IMR-90 (cell line): ENCODE measurements at regions of chr2 and their contacts with region 1.

Region 1: GRCh38 chr2:55431982-55432627 is 12.4 kb upstream of the CCDC88A start:
- DNase-seq: peak; percentile 56
- ATAC-seq: peak; percentile 79
- H3K4me3 ChIP-seq: no peak overlapping the region
- H3K27ac ChIP-seq: no peak overlapping the region
- H3K4me1 ChIP-seq: no peaks in the 10 kb centered on the region
- H3K27me3 ChIP-seq: peaks cover 1% of the 10 kb centered on the region; the same call in 1 of the 2 replicates
- CTCF ChIP-seq: peak; percentile 68
- POLR2A ChIP-seq: no peak
- RAD21 ChIP-seq: peak; percentile 72

Region 2: GRCh38 chr2:55460562-55460961 is 28.5 kb after region 1 on chr2:
- CTCF ChIA-PET with region 1: no interaction called
- POLR2A ChIA-PET with region 1: no interaction called
- dilution Hi-C with region 1: no loop called
- in situ Hi-C with region 1: no loop called
- intact Hi-C with region 1: no loop called
- DNase-seq: peak; percentile 32
- ATAC-seq: no peak
- H3K4me3 ChIP-seq: no peak overlapping the region
- H3K27ac ChIP-seq: no peak overlapping the region
- H3K4me1 ChIP-seq: no peaks in the 10 kb centered on the region
- H3K27me3 ChIP-seq: peaks cover 11% of the 10 kb centered on the region
- CTCF ChIP-seq: no peak
- POLR2A ChIP-seq: no peak
- RAD21 ChIP-seq: no peak

Region 3: DNA sequence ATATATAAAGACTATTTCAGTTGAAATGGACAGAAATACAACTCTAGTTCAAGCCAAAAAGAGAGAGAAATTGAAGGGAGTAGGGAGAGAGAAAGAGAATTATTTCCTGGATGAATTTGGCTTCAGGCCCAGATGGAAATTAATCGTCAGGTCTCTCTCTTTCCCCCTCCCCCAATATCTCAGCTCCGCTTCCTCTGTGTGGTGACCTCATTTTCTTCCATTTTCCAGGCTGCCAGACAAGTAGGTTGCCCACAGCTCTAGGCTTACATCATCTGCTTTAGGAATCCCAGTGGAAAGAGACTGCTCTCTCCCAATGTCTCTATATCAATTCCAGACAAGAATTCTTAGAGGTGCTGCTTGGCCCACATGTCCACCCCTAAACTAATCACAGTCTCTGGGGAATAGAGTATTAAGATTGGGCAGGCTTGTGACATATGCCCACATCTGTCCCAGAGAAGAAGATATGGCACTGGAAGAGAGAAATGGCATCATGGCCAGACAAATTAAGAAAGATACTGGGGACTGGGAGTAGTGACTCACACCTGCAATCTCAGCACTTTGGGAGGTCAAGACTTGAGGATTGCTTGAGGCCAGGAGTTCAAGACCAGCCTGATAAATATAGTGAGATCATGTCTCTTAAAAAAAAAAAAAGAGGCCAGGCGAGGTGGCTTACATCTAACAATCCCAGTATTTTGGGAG is 50.2 kb after region 1 on chr2:
- CTCF ChIA-PET with region 1: no interaction called
- POLR2A ChIA-PET with region 1: no interaction called
- dilution Hi-C with region 1: no loop called
- in situ Hi-C with region 1: no loop called
- intact Hi-C with region 1: loop called (anchors 10 kb)
- DNase-seq: peak; percentile 45
- ATAC-seq: peak; percentile 54
- H3K4me3 ChIP-seq: no peak overlapping the region
- H3K27ac ChIP-seq: no peak overlapping the region
- H3K4me1 ChIP-seq: no peaks in the 10 kb centered on the region
- H3K27me3 ChIP-seq: peaks cover 3% of the 10 kb centered on the region; the same call in 1 of the 2 replicates
- CTCF ChIP-seq: no peak
- POLR2A ChIP-seq: no peak
- RAD21 ChIP-seq: no peak

Region 4: GRCh38 chr2:55511508-55512124 is 79.5 kb after region 1 on chr2:
- CTCF ChIA-PET with region 1: no interaction called
- POLR2A ChIA-PET with region 1: no interaction called
- dilution Hi-C with region 1: no loop called
- in situ Hi-C with region 1: no loop called
- intact Hi-C with region 1: loop called (anchors 2 kb)
- DNase-seq: peak; percentile 50
- ATAC-seq: peak; percentile 72; the same call in 1 of the 2 replicates
- H3K4me3 ChIP-seq: no peak overlapping the region
- H3K27ac ChIP-seq: no peak overlapping the region
- H3K4me1 ChIP-seq: no peaks in the 10 kb centered on the region
- H3K27me3 ChIP-seq: no peaks in the 10 kb centered on the region
- CTCF ChIP-seq: peak; percentile 58
- POLR2A ChIP-seq: no peak
- RAD21 ChIP-seq: peak; percentile 52